ENCODE measurements at regions of chr1 and their contacts with region 1.

Region 1: DNA sequence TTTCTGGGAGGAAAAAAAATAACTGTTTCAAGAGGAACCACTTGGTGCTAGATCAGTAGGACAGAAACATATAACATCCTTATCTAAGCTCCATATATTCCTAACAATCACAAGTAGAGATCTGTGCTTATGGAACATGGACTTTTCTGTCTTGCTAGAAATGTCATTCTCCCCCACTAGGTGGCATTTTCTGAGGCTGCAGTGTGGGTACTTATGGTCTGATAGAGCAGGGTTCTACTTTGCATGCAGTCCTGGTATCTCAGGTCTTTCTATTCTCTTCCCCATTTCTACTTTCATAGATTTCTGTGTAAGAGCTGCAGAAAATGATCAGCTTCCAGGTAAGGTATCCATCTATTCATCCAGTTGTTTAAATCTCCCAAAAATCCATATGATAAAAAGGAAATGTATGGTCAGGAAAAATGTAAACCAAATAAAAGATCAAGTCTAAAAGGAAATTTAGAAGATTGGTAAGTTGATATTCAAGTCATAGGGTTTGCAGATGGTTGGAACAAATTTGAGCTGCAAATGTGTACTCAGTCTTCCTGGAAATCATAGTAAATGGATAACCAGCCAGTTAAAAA is 1.5 kb downstream of the ZNF684 start:
- DNase-seq: peak; percentile 57
- H3K27ac ChIP-seq: no peak overlapping the region
- CTCF ChIP-seq: peak; percentile 69

Region 2: GRCh38 chr1:40567825-40568224 is 34.9 kb after region 1 on chr1:
- CTCF ChIA-PET with region 1: no interaction called
- POLR2A ChIA-PET with region 1: no interaction called
- DNase-seq: no peak
- H3K27ac ChIP-seq: no peak overlapping the region
- CTCF ChIP-seq: no peak

Region 3: DNA sequence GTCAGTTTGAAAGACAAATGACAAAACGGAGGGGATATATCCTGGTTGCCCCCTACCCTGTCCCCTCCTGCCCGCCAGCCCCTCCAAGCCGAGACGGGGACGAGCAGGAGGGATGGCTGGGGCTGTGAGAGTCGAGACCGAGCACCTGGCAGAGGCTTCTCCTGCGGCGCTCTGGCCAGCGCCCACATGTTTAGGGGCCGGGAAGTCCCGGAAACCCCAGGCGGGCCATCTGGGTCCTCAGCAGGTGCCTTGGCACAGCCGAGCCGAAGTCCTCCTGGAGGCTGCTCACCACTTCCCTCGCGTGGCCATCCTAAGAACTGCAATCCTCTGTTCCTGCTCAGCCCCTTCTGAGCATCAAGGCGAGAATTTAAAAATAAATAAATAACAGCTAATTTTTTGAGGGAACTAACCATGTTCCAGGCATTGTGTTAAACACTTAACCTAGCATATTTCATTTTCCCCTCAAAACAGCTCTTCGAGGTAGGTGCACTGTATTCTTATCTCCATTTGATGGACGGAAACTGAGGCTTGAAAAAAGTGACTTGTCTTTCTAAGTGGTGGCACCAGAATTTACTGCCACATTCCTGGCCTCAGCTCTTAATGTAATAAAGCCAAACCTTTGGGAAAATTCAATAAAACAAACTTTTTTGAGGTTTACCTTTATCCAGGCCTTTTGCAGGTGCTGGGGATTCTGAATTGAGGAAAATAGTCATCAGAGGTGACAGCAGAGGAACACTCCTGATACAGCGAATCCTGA is 136.0 kb after region 1 on chr1:
- CTCF ChIA-PET with region 1: interaction called, 11 read pairs
- POLR2A ChIA-PET with region 1: no interaction called
- DNase-seq: peak; percentile 70
- H3K27ac ChIP-seq: no peak overlapping the region
- CTCF ChIP-seq: peak; percentile 94

Region 4: DNA sequence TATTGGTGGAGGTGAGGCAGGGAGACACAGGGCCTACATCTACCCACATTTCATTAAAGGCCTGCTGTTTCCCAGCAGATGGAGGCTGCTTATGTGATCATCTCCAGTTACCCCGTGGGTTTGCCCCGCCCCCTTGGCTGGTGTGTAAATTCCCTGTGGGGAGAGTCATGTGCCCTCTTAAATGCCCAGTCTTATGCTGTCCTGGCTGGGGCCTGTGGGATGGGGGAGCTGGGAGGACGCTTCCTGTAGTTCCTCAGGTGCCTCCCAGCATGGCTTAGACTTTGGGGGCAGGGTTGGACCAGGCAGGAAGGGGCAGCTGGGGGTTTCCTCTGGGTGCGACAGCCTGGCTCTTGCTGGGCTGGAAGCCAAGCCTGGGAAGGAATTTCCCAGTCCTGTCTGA is 344.8 kb after region 1 on chr1:
- CTCF ChIA-PET with region 1: no interaction called
- POLR2A ChIA-PET with region 1: no interaction called
- DNase-seq: peak; percentile 77
- H3K27ac ChIP-seq: peak overlapping the region; percentile 88
- CTCF ChIP-seq: no peak

Measured in RWPE1 (cell line).